Heart right ventricle (tissue), 16 donors: ENCODE measurements at regions of chr10 and their contacts with region 1.

Region 1: GRCh38 chr10:55242544-55242943 is 441.5 kb upstream of the PCDH15 start:
- DNase-seq: no peak
- ATAC-seq: no peak
- H3K4me3 ChIP-seq: no peak overlapping the region
- H3K27ac ChIP-seq: no peak overlapping the region
- H3K4me1 ChIP-seq: peaks cover 0 to 4% (median 0%) of the 10 kb centered on the region in 9 donors
- H3K27me3 ChIP-seq: no peaks in the 10 kb centered on the region
- CTCF ChIP-seq: no peak

Region 2: GRCh38 chr10:55183993-55184392 is 58.6 kb before region 1 on chr10:
- intact Hi-C with region 1: loop called in 1 of 10 experiments (anchors 10 kb)
- DNase-seq: no peak
- ATAC-seq: no peak
- H3K4me3 ChIP-seq: no peak overlapping the region
- H3K27ac ChIP-seq: no peak overlapping the region
- H3K4me1 ChIP-seq: no peaks in the 10 kb centered on the region
- H3K27me3 ChIP-seq: no peaks in the 10 kb centered on the region
- CTCF ChIP-seq: no peak